ENCODE measurements at regions of chr1 and their contacts with region 1.

Region 1: DNA sequence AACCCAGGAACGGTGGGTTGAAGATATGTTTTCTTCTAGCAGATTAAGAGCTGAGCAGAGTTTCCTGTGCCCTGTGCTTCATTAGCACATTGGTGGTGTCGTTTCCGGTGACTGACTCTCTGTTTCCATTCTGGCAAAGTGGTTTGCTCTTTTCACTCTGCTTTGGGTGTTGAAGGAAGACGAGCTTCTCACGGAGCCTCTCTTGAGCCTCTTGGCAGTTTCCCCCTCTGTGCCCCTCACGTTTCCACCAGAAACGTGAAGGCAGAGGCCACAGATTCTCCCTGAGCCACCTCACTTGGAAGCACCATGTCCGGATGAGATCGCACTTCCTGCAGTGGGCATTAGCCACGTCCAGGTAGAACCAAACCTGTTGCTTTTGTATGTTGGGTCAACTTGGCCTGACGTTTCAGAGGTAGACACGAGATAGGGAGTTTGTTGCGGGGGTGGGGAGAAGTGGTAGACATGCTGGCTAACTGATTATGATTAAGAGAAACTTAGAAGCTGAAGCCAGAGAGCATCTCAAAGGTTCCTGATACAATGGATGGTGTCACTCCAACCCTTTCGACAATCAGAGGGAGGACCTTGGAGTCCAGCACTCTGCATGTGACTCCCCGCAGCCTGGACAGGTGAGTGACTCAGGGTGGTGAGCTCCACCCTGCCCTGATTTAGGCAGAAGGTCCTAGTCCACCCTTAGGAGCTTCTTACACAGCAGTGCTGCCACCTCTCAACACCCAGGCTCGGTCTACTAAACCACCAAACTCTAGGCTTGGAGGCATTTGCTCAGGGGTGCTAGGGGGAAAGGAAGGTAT is at the start of gene LAX1:
- DNase-seq: no peak
- H3K4me3 Mint-ChIP-seq: no peak within 1 kb of the TSS
- H3K27ac Mint-ChIP-seq: no peak within 1 kb of the TSS
- H3K4me1 Mint-ChIP-seq: peaks cover 22% of the 10 kb centered on the region
- H3K27me3 Mint-ChIP-seq: peaks cover 23% of the 10 kb centered on the region
- CTCF ChIP-seq: no peak
- total RNA-seq, gene LAX1: not detected in 2 replicates

Region 2: GRCh38 chr1:203692565-203693470 is 72.4 kb before region 1 on chr1:
- CTCF ChIA-PET with region 1: no interaction called
- intact Hi-C with region 1: no loop called
- DNase-seq: peak; percentile 40
- H3K4me3 Mint-ChIP-seq: no peak overlapping the region
- H3K27ac Mint-ChIP-seq: no peak overlapping the region
- H3K4me1 Mint-ChIP-seq: peaks cover 11% of the 10 kb centered on the region
- H3K27me3 Mint-ChIP-seq: peaks cover 17% of the 10 kb centered on the region
- CTCF ChIP-seq: no peak

Region 3: GRCh38 chr1:203744075-203744972 is 20.9 kb before region 1 on chr1:
- CTCF ChIA-PET with region 1: no interaction called
- intact Hi-C with region 1: loop called (anchors 1 kb)
- DNase-seq: no peak
- H3K4me3 Mint-ChIP-seq: no peak overlapping the region
- H3K27ac Mint-ChIP-seq: no peak overlapping the region
- H3K4me1 Mint-ChIP-seq: no peaks in the 10 kb centered on the region
- H3K27me3 Mint-ChIP-seq: peaks cover 57% of the 10 kb centered on the region
- CTCF ChIP-seq: no peak